ENCODE measurements at regions of chr17 and their contacts with region 1.

Region 1: GRCh38 chr17:70447588-70447987 is 278.3 kb downstream of the KCNJ2 start:
- DNase-seq: no peak
- H3K4me3 ChIP-seq: no peak overlapping the region
- H3K27ac ChIP-seq: no peak overlapping the region
- H3K4me1 ChIP-seq: no peaks in the 10 kb centered on the region
- H3K27me3 ChIP-seq: no peaks in the 10 kb centered on the region
- CTCF ChIP-seq: no peak
- EP300 ChIP-seq: no peak
- POLR2A ChIP-seq: no peak

Region 2: DNA sequence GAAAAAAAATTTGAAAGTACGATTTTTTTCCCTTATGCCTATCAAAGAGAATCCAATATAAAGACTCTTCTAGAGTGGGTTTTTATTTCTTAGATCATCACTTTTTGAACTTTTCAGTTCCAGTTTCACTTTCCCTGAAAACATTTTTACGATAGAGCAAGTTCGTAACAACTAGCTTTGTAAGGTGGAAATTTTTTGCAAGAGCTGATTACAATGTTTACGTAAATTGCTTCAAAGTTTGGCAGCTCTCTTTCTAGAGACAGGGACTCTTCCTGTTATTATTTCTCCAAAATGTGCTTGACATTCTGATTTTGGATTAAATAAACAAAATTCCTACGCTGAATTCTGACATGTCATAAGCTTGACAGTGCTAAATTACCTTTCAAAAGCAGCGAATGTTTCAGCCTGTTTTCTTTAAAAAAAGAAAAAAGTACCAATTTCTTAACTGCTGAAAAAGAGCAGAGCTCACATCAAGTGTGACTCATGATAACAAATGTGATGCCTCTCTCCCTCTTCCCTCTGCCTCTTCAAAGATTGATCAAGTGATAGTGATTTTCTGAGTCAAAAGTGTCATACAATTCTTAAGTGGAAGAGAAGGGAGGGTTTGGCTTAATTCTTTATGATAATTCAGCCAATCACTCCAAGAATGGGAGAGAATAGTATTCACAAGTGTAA is 103.1 kb before region 1 on chr17:
- intact Hi-C with region 1: no loop called
- DNase-seq: no peak
- H3K4me3 ChIP-seq: peak overlapping the region; percentile 4
- H3K27ac ChIP-seq: no peak overlapping the region
- H3K4me1 ChIP-seq: no peaks in the 10 kb centered on the region
- H3K27me3 ChIP-seq: no peaks in the 10 kb centered on the region
- CTCF ChIP-seq: no peak
- EP300 ChIP-seq: no peak
- POLR2A ChIP-seq: no peak

Region 3: DNA sequence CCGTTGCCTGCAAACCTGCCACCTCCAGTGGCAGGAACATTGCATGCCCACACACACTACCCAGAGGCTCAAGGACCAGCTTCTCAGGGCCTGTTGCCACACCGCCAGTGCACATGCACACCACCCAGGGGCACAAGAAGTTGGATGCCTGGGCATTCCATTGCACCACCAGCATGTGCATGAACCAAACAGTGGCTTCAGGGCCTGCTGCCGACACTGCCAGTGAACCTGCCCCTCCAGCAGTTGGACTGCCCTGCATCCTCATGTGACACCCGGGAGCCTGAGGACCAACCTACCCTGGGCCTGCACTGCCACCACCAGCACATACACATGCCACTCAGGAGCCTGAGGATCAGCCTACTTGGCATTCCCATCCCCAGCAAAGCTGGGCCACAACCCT is 25.5 kb after region 1 on chr17:
- intact Hi-C with region 1: loop called in 1 of 4 experiments (anchors 1 kb)
- DNase-seq: no peak
- H3K4me3 ChIP-seq: no peak overlapping the region
- H3K27ac ChIP-seq: no peak overlapping the region
- H3K4me1 ChIP-seq: no peaks in the 10 kb centered on the region
- H3K27me3 ChIP-seq: no peaks in the 10 kb centered on the region
- CTCF ChIP-seq: no peak
- EP300 ChIP-seq: no peak
- POLR2A ChIP-seq: no peak

Measured in ovary (tissue), 10 donors.